WTC11 (cell line): ENCODE measurements at regions of chr2 and their contacts with region 1.

Region 1: GRCh38 chr2:219294356-219295351 is 14.5 kb downstream of the PTPRN start:
- DNase-seq: peak; percentile 90
- ATAC-seq: peak; percentile 82
- H3K4me3 Mint-ChIP-seq: peak overlapping the region; percentile 88
- H3K27ac Mint-ChIP-seq: peak overlapping the region; percentile 7; the same call in 1 of the 2 replicates
- H3K4me1 Mint-ChIP-seq: peaks cover 21% of the 10 kb centered on the region
- H3K27me3 Mint-ChIP-seq: peaks cover 64% of the 10 kb centered on the region
- CTCF ChIP-seq: peak; percentile 96

Region 2: GRCh38 chr2:219057709-219058540 is 236.7 kb before region 1 on chr2:
- CTCF ChIA-PET with region 1: interaction called, 10 read pairs
- POLR2A ChIA-PET with region 1: no interaction called
- DNase-seq: peak; percentile 91
- ATAC-seq: peak; percentile 82
- H3K4me3 Mint-ChIP-seq: peak overlapping the region; percentile 58
- H3K27ac Mint-ChIP-seq: no peak overlapping the region
- H3K4me1 Mint-ChIP-seq: peaks cover 25% of the 10 kb centered on the region
- H3K27me3 Mint-ChIP-seq: peaks cover 96% of the 10 kb centered on the region
- CTCF ChIP-seq: peak; percentile 80

Region 3: GRCh38 chr2:219171231-219171651 is 123.4 kb before region 1 on chr2:
- CTCF ChIA-PET with region 1: interaction called, 18 read pairs
- POLR2A ChIA-PET with region 1: interaction called, 3 read pairs
- DNase-seq: peak; percentile 23
- ATAC-seq: peak; percentile 74
- H3K4me3 Mint-ChIP-seq: no peak overlapping the region
- H3K27ac Mint-ChIP-seq: peak overlapping the region; percentile 88
- H3K4me1 Mint-ChIP-seq: peaks cover 9% of the 10 kb centered on the region; the same call in 1 of the 2 replicates
- H3K27me3 Mint-ChIP-seq: no peaks in the 10 kb centered on the region
- CTCF ChIP-seq: peak; percentile 46; the same call in 1 of the 2 replicates

Region 4: DNA sequence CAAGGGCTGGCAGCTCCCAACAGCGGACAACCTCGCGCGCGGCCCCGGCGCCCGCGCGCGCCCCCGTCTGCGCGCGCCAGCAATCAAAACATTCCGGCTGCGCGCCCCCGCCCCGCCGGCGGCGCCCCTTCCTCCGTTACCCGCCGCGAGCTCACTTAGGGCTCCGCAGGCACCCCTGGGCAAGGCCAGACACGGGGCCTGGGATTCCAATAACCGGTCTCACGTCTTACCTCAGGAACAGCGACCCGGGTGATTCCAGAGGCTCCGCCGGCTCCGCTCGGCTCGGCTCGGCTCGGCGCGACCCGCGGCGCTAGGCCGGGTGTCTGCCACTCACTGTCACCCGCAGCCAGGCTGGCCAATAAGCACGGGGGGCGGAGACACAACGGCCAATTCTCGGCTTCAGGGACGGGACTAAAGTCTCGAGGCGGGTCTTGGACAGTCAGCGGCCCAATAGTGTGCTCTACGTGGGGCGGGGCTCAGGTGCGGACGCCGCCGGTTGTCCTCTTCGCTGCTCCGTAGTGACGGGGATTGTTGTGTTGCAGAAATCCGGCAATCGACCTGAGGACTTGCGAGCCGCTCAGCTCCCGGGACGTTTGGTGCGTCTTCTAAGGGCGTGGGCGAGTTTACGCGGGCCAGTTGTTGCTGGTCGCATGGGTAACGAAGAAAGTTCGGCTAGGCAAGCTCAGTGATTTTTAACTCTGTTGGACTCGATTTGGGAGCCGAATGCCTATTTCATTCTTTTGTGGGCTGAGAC is 65.2 kb before region 1 on chr2 and contains the starts of genes ANKZF1 and ATG9A:
- CTCF ChIA-PET with region 1: interaction called, 21 read pairs
- POLR2A ChIA-PET with region 1: interaction called, 6 read pairs
- DNase-seq: peak; percentile 99
- ATAC-seq: peak; percentile 98
- H3K4me3 Mint-ChIP-seq: peak within 1 kb of the TSS; percentile 93
- H3K27ac Mint-ChIP-seq: peak within 1 kb of the TSS; percentile 97
- H3K4me1 Mint-ChIP-seq: peaks cover 12% of the 10 kb centered on the region
- H3K27me3 Mint-ChIP-seq: no peaks in the 10 kb centered on the region
- CTCF ChIP-seq: no peak
- total RNA-seq, gene ANKZF1: 56.9 to 70.4 TPM (median 58.0 TPM) in 3 replicates
- total RNA-seq, gene ATG9A: 42.9 to 48.4 TPM (median 46.7 TPM) in 3 replicates

Region 5: GRCh38 chr2:219278655-219279516 is 15.8 kb before region 1 on chr2 and contains the start of gene DNAJB2:
- CTCF ChIA-PET with region 1: interaction called, 158 read pairs
- POLR2A ChIA-PET with region 1: interaction called, 17 read pairs
- DNase-seq: peak; percentile 97
- ATAC-seq: peak; percentile 81
- H3K4me3 Mint-ChIP-seq: peak within 1 kb of the TSS; percentile 88
- H3K27ac Mint-ChIP-seq: peak within 1 kb of the TSS; percentile 96
- H3K4me1 Mint-ChIP-seq: peaks cover 32% of the 10 kb centered on the region
- H3K27me3 Mint-ChIP-seq: peaks cover 5% of the 10 kb centered on the region; the same call in 1 of the 2 replicates
- CTCF ChIP-seq: no peak
- total RNA-seq, gene DNAJB2: 36.1 to 42.8 TPM (median 40.3 TPM) in 3 replicates

Region 6: DNA sequence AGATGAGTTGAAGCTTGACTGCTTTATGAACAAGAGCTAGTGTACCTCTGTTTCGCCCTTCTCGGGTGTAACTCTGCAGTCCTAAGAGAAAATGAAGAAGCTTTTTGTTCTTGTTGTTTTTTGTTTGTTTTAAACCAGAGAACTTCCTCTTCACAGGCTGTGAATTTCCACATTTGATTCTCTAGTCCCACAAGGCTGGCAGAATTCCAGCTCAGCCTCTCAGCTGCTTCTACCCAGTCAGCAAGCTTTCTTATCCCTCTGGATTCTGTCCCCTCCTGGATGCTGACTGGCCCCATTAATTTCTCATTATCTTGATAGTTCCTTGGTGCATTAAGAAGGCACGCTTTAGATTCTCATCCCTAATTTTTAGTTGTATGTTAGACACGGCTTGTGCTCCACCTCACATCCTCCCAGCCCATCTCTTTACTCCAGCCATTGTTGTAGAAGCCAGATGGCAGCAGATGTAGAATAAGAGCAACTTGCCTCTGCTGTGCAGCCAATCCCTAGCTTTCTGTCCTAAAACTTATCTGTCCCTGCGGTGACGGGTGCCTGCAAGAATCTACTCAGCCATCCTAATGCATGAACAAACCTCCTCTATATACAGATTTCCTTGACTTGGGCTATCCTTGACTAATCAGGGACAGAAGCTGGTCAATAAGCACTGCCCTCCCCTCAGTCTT is 50.2 kb after region 1 on chr2:
- CTCF ChIA-PET with region 1: interaction called, 10 read pairs
- POLR2A ChIA-PET with region 1: no interaction called
- DNase-seq: no peak
- ATAC-seq: no peak; the same call in 1 of the 2 replicates
- H3K4me3 Mint-ChIP-seq: no peak overlapping the region
- H3K27ac Mint-ChIP-seq: no peak overlapping the region
- H3K4me1 Mint-ChIP-seq: no peaks in the 10 kb centered on the region
- H3K27me3 Mint-ChIP-seq: peaks cover 12% of the 10 kb centered on the region
- CTCF ChIP-seq: no peak

Region 7: GRCh38 chr2:219388127-219388844 is 93.6 kb after region 1 on chr2:
- CTCF ChIA-PET with region 1: interaction called, 27 read pairs
- POLR2A ChIA-PET with region 1: interaction called, 5 read pairs
- DNase-seq: peak; percentile 97
- ATAC-seq: peak; percentile 76
- H3K4me3 Mint-ChIP-seq: peak overlapping the region; percentile 76
- H3K27ac Mint-ChIP-seq: no peak overlapping the region; the same call in 1 of the 2 replicates
- H3K4me1 Mint-ChIP-seq: peaks cover 7% of the 10 kb centered on the region
- H3K27me3 Mint-ChIP-seq: 0 out of 2 replicates have a peak, but pooled peaks cover 3% of the 10 kb centered on the region
- CTCF ChIP-seq: no peak